Heart right ventricle (tissue), 16 donors: ENCODE measurements at regions of chr2 and their contacts with region 1.

Region 1: GRCh38 chr2:42047488-42048298 is at the start of gene PKDCC:
- DNase-seq: peak; percentile 83 to 91
- ATAC-seq: peak; percentile 76 to 93 (median 86)
- H3K4me3 ChIP-seq: peak within 1 kb of the TSS; percentile 68 to 100 (median 88)
- H3K27ac ChIP-seq: peak within 1 kb of the TSS; percentile 80 to 97 (median 92)
- H3K4me1 ChIP-seq: peaks cover 18 to 67% (median 23%) of the 10 kb centered on the region in 9 donors
- H3K27me3 ChIP-seq: peaks cover 0 to 36% (median 0%) of the 10 kb centered on the region in 7 donors
- CTCF ChIP-seq: no peak
- total RNA-seq, gene PKDCC: 25.1 to 263 (median 41.5) TPM

Region 2: DNA sequence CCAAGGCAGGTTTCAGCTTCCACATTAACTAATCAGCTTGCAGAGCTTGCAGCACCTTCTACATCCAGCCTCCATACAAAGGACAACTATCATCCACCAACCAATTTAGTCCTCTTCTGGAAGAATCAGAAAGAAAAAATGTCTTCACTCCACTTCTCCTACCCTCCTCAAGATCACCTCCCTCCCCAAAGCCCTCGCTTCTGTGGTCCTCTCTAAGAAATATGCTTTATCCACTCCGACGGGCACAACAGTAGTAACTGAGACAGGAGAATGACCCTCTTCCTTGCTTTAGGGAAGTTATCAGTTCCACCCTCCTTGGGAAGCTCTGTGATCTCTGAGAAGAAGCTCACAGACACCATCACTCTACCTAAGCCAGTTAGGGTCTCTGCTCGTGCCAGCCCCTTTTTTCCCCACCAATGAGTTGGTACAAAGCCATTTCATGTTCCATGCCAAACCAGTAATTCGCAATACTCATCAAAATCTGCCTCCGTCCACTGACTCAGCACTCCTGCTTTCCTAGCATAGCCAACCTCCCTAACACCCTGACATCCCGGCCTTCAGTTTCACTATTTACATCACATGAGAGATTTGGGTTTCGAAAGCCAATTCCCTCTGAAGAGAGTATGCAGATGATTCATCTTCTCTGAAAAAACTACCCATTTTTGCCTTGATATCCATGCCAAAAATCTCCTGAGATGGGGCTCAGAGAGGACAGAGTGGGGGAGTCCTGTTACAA is 113.9 kb before region 1 on chr2:
- intact Hi-C with region 1: loop called in 7 of 10 experiments (anchors 5 to 10 kb)
- DNase-seq: no peak
- ATAC-seq: peak in 3 of 8 donors; percentile 9 to 45 (median 27)
- H3K4me3 ChIP-seq: no peak overlapping the region
- H3K27ac ChIP-seq: peak overlapping the region in 8 of 10 donors; percentile 24 to 82 (median 64)
- H3K4me1 ChIP-seq: peaks cover 9 to 64% (median 39%) of the 10 kb centered on the region in 9 donors
- H3K27me3 ChIP-seq: no peaks in the 10 kb centered on the region
- CTCF ChIP-seq: no peak

Region 3: GRCh38 chr2:41947701-41948396 is 99.8 kb before region 1 on chr2:
- intact Hi-C with region 1: loop called in 3 of 10 experiments (anchors 5 kb)
- DNase-seq: peak; percentile 57 to 68
- ATAC-seq: peak; percentile 88 to 96 (median 94)
- H3K4me3 ChIP-seq: no peak overlapping the region
- H3K27ac ChIP-seq: peak overlapping the region; percentile 42 to 87 (median 68)
- H3K4me1 ChIP-seq: peaks cover 0 to 69% (median 37%) of the 10 kb centered on the region in 9 donors
- H3K27me3 ChIP-seq: no peaks in the 10 kb centered on the region
- CTCF ChIP-seq: no peak

Region 4: DNA sequence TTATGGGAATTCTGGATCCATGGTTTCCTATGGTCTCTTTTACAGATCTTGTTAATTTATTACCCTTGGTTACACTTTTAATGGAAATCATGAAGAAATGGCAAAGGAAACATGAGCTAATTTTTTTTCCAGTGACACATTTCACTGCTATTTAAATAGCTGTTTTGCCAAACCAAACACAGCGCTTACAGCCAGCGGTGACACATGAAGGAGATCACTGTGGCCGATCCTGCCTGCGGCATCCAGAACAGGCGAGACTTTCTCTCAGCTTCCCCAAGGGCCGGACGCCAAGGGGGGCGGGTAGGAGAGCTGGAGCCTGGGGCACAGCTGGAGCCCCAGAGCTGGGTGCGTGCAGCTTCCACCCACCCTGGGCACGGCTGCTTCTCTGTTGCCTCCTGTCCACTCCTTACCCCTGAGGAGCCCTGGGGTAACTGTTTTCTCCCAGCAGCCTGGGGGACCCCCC is 81.2 kb before region 1 on chr2:
- intact Hi-C with region 1: loop called in 1 of 10 experiments (anchors 10 kb)
- DNase-seq: peak; percentile 82 to 85
- ATAC-seq: peak; percentile 76 to 86 (median 83)
- H3K4me3 ChIP-seq: no peak overlapping the region
- H3K27ac ChIP-seq: peak overlapping the region; percentile 69 to 82 (median 77)
- H3K4me1 ChIP-seq: peaks cover 0 to 59% (median 36%) of the 10 kb centered on the region in 9 donors
- H3K27me3 ChIP-seq: no peaks in the 10 kb centered on the region
- CTCF ChIP-seq: no peak